Left cardiac atrium (tissue), 4 donors: ENCODE measurements at regions of chr4 and their contacts with region 1.

Region 1: GRCh38 chr4:64407000-64407399 is 2.2 kb downstream of the TECRL start:
- DNase-seq: no peak
- ATAC-seq: no peak

Region 2: DNA sequence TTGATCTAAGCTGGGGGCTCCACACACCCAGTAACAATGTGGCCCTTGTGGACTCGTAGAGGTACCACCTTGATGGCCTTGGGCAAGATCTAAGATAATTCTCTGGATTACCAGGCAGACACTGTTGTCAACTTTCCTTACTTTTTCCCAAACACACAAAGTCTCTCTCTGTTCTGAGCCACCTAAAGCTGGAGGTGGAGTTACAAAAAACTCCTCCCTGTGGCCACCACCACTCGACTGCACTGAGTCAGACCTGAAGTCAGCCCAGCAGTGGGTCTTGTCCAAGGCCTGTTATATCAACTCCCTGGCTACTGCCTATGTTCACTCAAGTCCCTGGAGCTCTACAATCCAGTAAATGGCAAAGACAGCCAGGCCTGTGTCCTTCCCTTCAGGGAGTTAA is 72.3 kb after region 1 on chr4:
- intact Hi-C with region 1: loop called in 1 of 2 experiments (anchors 5 kb)
- DNase-seq: no peak
- ATAC-seq: no peak

Region 3: DNA sequence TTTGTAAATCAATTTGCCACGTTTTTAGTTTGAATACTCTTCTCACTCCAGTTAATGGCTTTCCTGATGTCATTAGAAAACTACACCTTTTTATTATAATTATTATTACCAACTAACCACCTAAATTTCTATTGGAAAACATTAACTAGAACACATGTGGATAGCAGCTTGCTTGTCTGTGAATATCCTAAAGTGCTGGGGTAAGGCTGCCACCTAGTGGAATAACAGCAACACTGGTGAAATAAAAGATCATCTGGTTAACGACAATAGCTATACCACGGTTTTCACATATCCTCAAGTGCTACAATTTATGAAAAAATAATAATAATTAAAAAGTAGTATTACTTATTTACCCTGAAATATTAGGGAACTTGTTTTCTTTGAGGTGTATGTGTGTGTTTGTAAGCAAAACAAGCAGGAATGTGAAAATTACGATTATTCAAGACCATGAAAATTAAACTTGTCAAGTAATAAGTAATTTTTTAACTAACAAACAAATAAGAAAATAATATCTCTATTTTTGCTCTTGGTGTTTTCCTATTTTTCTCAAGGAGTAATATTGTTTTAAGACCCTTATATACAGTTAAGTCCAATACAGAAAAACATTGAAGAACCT is 132.3 kb after region 1 on chr4:
- intact Hi-C with region 1: loop called in 1 of 2 experiments (anchors 10 kb)
- DNase-seq: peak; percentile 20
- ATAC-seq: peak; percentile 71 to 79